ENCODE measurements at regions of chr12 and their contacts with region 1.

Region 1: GRCh38 chr12:9827209-9827888 is at the start of gene KLRF1:
- DNase-seq: peak in 1 of 2 donors; percentile 24
- ATAC-seq: peak; percentile 66 to 84 (median 81)
- H3K4me3 ChIP-seq: peak within 1 kb of the TSS; percentile 88
- H3K4me3 Mint-ChIP-seq: peak within 1 kb of the TSS; percentile 100
- H3K27ac ChIP-seq: peak within 1 kb of the TSS; percentile 85
- H3K27ac Mint-ChIP-seq: peak within 1 kb of the TSS in 1 of 2 donors; percentile 91
- H3K4me1 ChIP-seq: peaks cover 3% of the 10 kb centered on the region
- H3K4me1 Mint-ChIP-seq: peaks cover 42% of the 10 kb centered on the region in 2 donors
- H3K27me3 ChIP-seq: no peaks in the 10 kb centered on the region
- H3K27me3 Mint-ChIP-seq: no peaks in the 10 kb centered on the region
- CTCF ChIP-seq: no peak
- total RNA-seq, gene KLRF1: 364 to 424 (median 392) TPM

Region 2: DNA sequence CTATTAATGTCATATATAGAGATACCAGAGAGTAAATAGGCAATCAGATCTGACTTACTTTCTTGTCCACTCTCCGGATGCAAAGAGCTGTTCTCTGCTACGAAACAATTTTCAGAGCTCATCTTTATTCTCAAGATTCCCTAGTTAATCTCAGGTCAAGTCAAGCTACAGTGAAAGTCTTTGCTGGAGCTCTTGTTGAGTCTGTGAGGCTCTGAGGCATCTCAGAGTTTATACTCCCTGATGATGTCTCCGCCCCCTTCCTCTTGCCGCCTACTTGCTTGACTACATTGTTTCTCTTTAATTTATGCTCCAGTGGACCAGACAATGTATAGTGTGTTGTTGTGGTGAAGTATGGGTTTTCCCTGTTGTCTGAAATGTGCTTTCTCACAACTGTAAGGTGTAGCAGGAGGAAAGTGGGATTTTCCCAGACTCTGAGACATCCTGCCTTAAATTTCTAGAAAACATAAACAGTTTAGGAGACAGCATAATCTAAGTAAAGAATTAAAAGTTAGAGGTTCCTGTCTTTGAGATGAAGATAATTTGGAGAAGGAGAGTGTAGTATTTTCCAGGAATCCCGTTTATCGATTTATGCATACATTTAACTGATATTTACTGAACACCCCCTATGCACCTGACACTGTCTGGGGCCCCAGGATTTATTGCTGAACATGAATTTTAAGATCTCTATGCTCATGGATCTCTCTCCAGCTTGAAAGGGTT is 66.5 kb before region 1 on chr12 and contains the start of gene CD69:
- intact Hi-C with region 1: loop called (anchors 1 kb)
- DNase-seq: peak; percentile 71 to 96
- ATAC-seq: peak; percentile 54 to 80 (median 73)
- H3K4me3 ChIP-seq: peak within 1 kb of the TSS; percentile 55
- H3K4me3 Mint-ChIP-seq: peak within 1 kb of the TSS; percentile 99
- H3K27ac ChIP-seq: peak within 1 kb of the TSS; percentile 100
- H3K27ac Mint-ChIP-seq: peak within 1 kb of the TSS; percentile 93 to 100
- H3K4me1 ChIP-seq: peaks cover 28% of the 10 kb centered on the region
- H3K4me1 Mint-ChIP-seq: peaks cover 78 to 84% of the 10 kb centered on the region in 2 donors
- H3K27me3 ChIP-seq: no peaks in the 10 kb centered on the region
- H3K27me3 Mint-ChIP-seq: no peaks in the 10 kb centered on the region
- CTCF ChIP-seq: no peak
- total RNA-seq, gene CD69: 739 to 1,541 (median 990) TPM